ENCODE measurements at regions of chr1 and their contacts with region 1.

Region 1: DNA sequence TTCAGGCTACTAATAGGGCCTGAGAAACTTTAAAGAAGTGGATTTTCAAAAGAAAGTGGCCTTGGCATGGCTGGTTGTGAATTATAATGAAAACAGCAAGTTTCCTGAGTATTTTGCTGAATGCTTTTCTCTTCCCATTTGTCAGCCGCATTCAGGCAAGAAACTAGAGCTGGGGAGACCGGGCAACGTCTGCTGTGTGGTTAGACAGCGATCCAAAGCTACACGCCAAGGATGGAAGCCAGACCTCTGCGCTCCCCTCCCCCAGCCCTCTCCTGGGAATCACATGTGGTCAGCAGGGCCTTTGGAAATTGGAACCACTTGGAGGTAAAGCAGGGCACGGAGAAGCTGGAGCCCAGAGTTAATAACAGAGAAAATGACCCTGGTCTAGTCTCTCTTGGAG is 114.1 kb upstream of the CD34 start:
- DNase-seq: no peak
- ATAC-seq: no peak
- H3K4me3 ChIP-seq: no peak overlapping the region
- H3K27ac ChIP-seq: no peak overlapping the region
- H3K4me1 ChIP-seq: no peaks in the 10 kb centered on the region
- H3K27me3 ChIP-seq: peaks cover 5 to 9% of the 10 kb centered on the region in 2 experiments; a peak in 2 of 4 replicates
- CTCF ChIP-seq: no peak
- EP300 ChIP-seq: no peak
- POLR2A ChIP-seq: no peak
- RAD21 ChIP-seq: no peak

Region 2: GRCh38 chr1:207959141-207959825 is 65.7 kb before region 1 on chr1:
- CTCF ChIA-PET with region 1: no interaction called
- POLR2A ChIA-PET with region 1: no interaction called
- RAD21 ChIA-PET with region 1: no interaction called
- SMC1A ChIA-PET with region 1: no interaction called
- in situ Hi-C with region 1: no loop called
- intact Hi-C with region 1: no loop called
- DNase-seq: no peak
- ATAC-seq: peak; percentile 7; the same call in 2 of the 3 replicates
- H3K4me3 ChIP-seq: no peak overlapping the region
- H3K27ac ChIP-seq: no peak overlapping the region
- H3K4me1 ChIP-seq: peaks cover 4% of the 10 kb centered on the region; the same call in 1 of the 2 replicates
- H3K27me3 ChIP-seq: peaks cover 9 to 20% of the 10 kb centered on the region in 2 experiments
- CTCF ChIP-seq: no peak
- EP300 ChIP-seq: no peak
- POLR2A ChIP-seq: no peak
- RAD21 ChIP-seq: no peak

Region 3: GRCh38 chr1:208007938-208008342 is 17.1 kb before region 1 on chr1:
- CTCF ChIA-PET with region 1: interaction called, 17 read pairs
- POLR2A ChIA-PET with region 1: no interaction called
- RAD21 ChIA-PET with region 1: no interaction called
- SMC1A ChIA-PET with region 1: interaction called, 5 read pairs
- in situ Hi-C with region 1: no loop called
- intact Hi-C with region 1: no loop called
- DNase-seq: no peak
- ATAC-seq: no peak
- H3K4me3 ChIP-seq: no peak overlapping the region
- H3K27ac ChIP-seq: no peak overlapping the region
- H3K4me1 ChIP-seq: no peaks in the 10 kb centered on the region
- H3K27me3 ChIP-seq: no peaks in the 10 kb centered on the region; a peak in 1 of 4 replicates
- CTCF ChIP-seq: no peak
- EP300 ChIP-seq: no peak
- POLR2A ChIP-seq: no peak
- RAD21 ChIP-seq: no peak

Region 4: GRCh38 chr1:208036109-208036808 is 11.2 kb after region 1 on chr1:
- CTCF ChIA-PET with region 1: interaction called, 25 read pairs
- POLR2A ChIA-PET with region 1: no interaction called
- RAD21 ChIA-PET with region 1: interaction called, 6 read pairs
- SMC1A ChIA-PET with region 1: interaction called, 4 read pairs
- in situ Hi-C with region 1: no loop called
- intact Hi-C with region 1: no loop called
- DNase-seq: no peak
- ATAC-seq: peak; percentile 73
- H3K4me3 ChIP-seq: no peak overlapping the region
- H3K27ac ChIP-seq: no peak overlapping the region
- H3K4me1 ChIP-seq: no peaks in the 10 kb centered on the region
- H3K27me3 ChIP-seq: peaks cover 0 to 2% of the 10 kb centered on the region in 2 experiments; a peak in 3 of 4 replicates
- CTCF ChIP-seq: peak; percentile 31 to 36 (median 33); a peak in 4 of 6 replicates
- EP300 ChIP-seq: no peak
- POLR2A ChIP-seq: no peak
- RAD21 ChIP-seq: no peak

Region 5: DNA sequence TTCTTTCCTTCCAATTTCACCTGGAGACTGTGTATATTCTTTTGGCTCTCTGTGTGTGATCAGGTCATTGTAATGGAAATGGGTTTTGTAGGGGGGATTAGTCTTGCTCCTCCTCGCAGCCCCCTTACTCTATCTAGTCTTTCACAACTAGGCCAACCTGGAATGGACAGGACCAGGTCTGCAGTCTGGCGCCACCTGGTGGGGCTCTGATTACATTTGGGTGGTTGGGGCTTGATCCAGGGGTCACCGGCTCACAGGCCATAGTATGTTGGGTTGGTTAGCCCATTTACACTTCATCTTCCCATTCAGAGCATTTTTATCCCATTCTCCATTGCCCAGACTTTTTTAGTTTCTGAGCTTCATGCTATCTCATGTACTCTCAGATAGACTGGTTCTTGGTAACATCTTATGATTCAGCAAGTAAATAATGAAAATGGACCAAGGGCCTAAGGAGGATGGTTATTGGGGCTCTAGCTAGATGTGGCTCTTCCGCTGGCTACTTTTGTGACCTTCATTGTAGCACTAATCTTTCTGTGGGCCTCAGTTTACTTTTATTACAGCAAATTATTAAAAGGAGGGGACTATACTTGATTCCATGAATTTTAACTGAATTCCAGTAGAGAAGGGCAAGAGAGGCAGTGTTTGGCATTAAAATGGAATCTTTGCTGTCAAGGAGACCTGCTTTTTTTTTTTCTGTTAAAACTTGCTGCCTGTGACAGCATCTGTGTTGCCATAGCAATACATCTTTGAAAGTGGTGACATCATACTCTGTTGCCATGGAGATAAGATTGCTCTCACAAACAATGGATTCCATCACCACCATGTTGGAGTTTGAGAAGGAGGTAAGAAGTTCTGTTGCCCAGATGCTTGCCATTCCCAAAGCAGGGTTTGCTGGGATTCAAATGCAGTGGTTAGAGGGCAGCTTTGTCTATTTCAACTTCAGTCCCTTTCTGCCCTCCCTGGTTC is 69.0 kb after region 1 on chr1:
- CTCF ChIA-PET with region 1: interaction called, 82 read pairs
- POLR2A ChIA-PET with region 1: no interaction called
- RAD21 ChIA-PET with region 1: interaction called, 14 read pairs
- SMC1A ChIA-PET with region 1: interaction called, 11 read pairs
- in situ Hi-C with region 1: no loop called
- intact Hi-C with region 1: loop called (anchors 2 kb)
- DNase-seq: no peak
- ATAC-seq: peak; percentile 95
- H3K4me3 ChIP-seq: no peak overlapping the region
- H3K27ac ChIP-seq: no peak overlapping the region
- H3K4me1 ChIP-seq: no peaks in the 10 kb centered on the region
- H3K27me3 ChIP-seq: no peaks in the 10 kb centered on the region; a peak in 1 of 4 replicates
- CTCF ChIP-seq: peak; percentile 78 to 89 (median 88)
- EP300 ChIP-seq: no peak
- POLR2A ChIP-seq: no peak
- RAD21 ChIP-seq: peak; percentile 59

Region 6: DNA sequence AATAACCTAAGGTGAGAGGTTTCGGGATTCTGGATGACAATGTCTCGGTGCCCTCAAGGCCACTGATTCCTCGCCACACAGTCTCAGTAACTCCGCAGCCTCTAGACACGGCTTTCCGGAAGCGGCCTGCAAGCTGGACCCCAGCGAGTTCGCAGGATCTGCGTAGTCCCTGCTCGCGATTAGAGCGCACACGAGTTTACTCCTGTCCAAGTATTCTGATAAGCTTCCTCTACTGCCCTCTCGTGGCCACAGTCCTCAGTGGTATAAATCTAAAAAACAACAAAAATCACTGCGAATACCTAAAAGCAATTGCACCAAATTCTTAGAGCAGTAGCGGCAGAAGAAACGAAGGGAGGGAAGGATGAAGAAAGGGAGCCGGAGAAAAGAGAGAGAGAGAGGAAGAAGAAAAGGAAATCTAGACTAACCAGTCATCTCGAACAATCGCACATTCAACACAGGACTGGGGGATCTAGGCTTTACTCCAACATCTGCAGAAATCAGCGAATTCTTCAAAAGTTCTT is 220.2 kb after region 1 on chr1:
- CTCF ChIA-PET with region 1: interaction called, 94 read pairs
- POLR2A ChIA-PET with region 1: no interaction called
- RAD21 ChIA-PET with region 1: interaction called, 59 read pairs
- SMC1A ChIA-PET with region 1: interaction called, 27 read pairs
- in situ Hi-C with region 1: loop called (anchors 5 kb)
- intact Hi-C with region 1: loop called (anchors 2 kb)
- DNase-seq: peak; percentile 26
- ATAC-seq: peak; percentile 92
- H3K4me3 ChIP-seq: no peak overlapping the region
- H3K27ac ChIP-seq: no peak overlapping the region
- H3K4me1 ChIP-seq: peaks cover 8% of the 10 kb centered on the region
- H3K27me3 ChIP-seq: peaks cover 10 to 15% of the 10 kb centered on the region in 2 experiments
- CTCF ChIP-seq: peak; percentile 74 to 79 (median 74)
- EP300 ChIP-seq: no peak
- POLR2A ChIP-seq: no peak
- RAD21 ChIP-seq: peak; percentile 75

Measured in GM12878 (cell line).